Motor neuron (in vitro differentiated cells): ENCODE measurements at regions of chr13 and their contacts with region 1.

Region 1: DNA sequence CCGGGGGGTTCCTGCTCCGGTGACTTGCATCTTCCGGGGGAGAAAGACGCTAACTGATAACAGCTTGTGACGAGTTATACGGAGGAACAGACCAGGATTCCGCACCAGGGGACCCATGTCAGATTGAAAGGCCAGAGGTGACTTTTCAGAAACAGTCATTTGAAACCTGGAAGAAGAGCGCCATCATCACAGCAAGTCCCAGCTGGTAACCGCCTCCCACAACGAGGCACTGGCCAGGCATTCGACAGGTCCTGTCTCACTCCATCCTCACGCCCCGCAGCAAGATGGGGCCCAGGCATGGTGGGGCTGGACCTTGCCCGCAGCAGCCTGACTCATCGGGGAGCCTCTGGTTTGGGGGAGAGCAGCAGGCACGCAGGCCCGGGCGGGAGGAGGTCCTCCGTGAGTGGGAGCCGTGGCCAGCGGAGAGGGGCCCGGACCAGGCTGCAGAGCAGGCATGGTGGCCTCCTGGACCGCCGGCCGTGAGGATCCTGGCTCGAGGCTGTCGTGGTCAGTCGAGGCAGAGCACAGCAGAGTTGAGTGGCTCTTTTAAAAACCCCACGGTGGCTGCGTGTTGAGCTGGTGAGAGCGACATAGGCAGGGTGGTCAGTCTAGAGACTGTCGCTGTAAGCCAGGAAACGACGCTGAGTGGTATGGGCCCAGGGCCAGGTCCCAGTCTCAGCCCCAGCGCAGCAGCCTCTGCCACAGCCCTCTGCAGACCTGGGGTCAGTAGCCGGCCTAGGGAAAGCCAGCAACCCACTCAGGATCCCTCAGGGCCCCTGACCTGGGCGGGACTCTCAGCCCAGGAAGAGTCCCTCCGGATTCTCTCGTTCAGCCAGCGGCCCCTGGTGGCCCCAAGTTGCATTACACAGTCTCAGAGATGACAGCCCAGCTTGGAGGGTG is 94.9 kb upstream of the MCF2L start:
- ATAC-seq: peak; percentile 87 to 99 (median 91)
- H3K4me3 ChIP-seq: no peak overlapping the region
- H3K27ac ChIP-seq: no peak overlapping the region
- H3K4me1 ChIP-seq: peaks cover 2 to 4% of the 10 kb centered on the region in 2 donors

Region 2: GRCh38 chr13:112416647-112417046 is 457.5 kb before region 1 on chr13:
- in situ Hi-C with region 1: no loop called
- ATAC-seq: no peak
- H3K4me3 ChIP-seq: no peak overlapping the region
- H3K27ac ChIP-seq: no peak overlapping the region
- H3K4me1 ChIP-seq: no peaks in the 10 kb centered on the region

Region 3: DNA sequence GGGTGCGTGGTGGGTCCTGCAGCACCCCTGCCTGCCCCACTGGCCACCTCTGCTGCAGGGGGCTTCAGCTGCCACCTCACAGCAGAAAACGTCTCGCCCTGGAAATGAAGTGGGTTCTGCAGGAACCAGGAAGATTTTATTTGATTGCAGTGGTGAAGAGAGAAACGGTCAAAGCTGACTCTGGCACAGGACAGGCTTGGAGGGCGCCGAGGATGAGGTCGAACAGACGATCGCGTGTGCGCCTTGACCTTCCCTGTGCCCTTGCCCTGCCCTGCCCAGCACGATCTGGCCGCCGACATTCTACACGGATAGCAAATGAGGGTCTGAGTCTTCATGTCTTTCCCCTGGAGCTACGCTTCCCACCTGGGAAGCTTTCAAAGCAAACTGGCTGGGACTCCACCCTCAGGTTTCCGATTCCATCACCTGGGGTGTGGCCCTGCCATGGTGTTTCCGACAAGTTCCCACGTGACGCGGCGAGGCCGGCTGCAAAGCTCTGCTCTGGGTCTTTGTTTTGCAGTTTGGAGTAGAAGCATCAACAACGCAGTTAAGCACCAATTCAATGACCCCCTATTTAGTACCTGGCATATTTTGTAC is 235.8 kb before region 1 on chr13:
- in situ Hi-C with region 1: loop called in 1 of 9 experiments (anchors 25 kb)
- ATAC-seq: no peak
- H3K4me3 ChIP-seq: no peak overlapping the region
- H3K27ac ChIP-seq: no peak overlapping the region
- H3K4me1 ChIP-seq: no peaks in the 10 kb centered on the region

Region 4: DNA sequence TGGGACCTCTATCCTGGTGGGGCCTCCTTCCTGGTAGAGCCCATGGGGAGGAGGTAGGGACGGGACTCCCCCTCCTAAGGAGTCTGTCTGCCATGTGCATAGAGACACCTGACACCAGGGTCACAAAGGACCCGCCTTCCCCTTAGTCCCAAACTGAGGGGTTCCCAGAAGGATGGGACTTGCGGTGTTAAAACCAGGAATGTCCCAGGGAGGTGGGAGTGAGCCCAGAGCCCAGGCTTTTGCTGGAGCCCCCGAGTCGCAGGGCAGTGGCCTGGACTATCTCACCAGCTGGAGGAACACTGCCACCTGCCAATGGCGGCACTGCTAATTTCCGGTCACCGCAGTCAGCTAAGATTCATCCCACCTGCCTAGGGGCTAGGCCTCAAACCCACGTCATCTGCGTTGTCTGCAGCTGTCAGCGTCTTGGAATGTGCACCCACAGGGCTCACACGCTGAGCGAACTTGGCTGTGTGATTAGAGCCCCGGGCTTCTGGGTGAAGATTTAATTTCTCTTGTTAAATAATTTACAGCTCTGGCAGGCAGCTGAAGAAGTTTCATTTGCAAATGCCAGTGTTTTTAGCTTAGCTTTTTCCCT is 216.2 kb before region 1 on chr13:
- in situ Hi-C with region 1: loop called in 1 of 9 experiments (anchors 25 kb)
- ATAC-seq: peak in 4 of 8 experiments; percentile 19 to 99 (median 68)
- H3K4me3 ChIP-seq: no peak overlapping the region
- H3K27ac ChIP-seq: no peak overlapping the region
- H3K4me1 ChIP-seq: no peaks in the 10 kb centered on the region

Region 5: DNA sequence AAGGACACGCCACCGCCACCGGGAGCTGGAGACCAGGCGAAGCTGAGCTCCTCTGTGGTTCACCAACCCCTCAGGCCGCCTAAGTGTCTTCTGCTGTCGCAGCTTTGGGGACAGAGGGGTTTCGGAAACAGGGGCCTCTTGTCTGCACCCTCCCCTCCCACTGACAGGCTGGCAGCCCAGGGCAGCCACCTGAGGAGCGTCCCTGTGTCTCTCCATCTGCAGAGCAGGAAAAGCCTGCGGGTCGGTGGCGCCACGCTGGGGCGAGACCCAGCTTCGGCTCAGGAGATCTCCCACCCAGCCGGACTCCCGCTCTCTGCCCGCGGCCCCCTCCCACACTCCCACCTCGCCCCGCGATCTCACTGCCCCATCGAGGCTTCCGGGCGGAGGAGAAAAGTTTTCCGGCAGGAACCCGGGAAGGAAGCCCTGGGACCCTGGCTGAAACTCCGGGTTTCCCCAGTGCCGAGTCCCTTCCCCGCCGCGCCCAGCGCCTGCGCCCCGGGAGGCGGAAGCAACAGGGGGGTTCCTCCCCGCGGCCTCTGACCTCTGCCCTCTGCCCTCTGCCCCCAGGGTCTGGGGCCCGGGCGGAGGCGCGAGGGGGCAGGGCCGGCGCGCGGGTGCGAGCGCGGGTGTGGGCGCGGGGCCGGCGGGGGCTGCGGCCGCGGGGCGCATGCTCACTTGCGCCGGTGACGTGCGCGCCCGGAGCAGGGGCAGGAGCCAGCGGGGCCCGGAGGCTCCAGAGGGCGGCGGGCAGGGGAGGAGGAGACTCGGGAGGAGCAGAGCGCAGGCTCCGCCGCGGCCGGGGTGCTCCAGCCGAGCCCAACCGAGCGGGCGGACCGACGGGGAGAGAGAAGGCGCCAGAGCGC is 184.6 kb before region 1 on chr13 and contains the start of gene ATP11A:
- in situ Hi-C with region 1: loop called in 1 of 9 experiments (anchors 25 kb)
- ATAC-seq: peak; percentile 90 to 98 (median 95)
- H3K4me3 ChIP-seq: peak within 1 kb of the TSS; percentile 53 to 88 (median 69)
- H3K27ac ChIP-seq: peak within 1 kb of the TSS; percentile 39 to 82
- H3K4me1 ChIP-seq: peaks cover 9 to 12% of the 10 kb centered on the region in 2 donors
- total RNA-seq, gene ATP11A: 6.7 to 36.1 (median 10.2) TPM

Region 6: DNA sequence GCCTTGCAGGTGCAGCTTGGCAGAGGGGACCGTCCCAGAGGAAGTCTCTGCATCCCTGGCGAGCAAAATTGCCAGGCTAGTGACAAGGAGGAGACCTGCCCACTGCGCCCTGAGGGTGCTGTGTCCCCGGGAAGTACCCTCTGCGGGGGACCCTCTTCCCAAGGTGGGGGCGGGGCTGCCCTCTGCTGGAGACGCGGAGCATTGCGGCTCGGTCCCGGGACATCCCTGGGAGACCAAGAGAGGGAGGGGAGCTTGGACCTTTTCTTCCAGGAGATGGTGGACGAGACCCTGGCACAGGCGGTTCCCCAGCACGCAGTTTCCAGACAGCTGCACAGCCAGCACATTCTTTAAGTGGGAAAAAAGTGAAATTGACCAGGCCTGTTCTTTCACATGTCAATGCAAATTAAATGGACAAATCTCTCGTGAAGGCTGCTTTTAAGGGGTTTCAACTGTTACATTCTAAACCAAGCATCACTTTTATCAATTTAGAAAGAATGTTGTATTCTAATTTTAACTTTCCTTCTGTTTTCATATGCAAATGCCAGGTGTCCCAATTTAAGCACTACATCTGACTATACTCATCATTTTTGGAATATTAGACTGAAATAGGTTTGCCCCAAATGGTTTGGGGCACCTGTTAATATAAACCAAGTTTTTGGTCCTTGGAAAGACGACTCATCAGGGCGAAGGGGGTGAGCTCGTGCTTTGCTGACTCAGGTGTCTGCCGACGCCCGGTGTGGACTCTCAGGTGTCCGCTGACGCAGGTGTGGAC is 155.6 kb after region 1 on chr13:
- in situ Hi-C with region 1: no loop called
- ATAC-seq: peak; percentile 41 to 86 (median 79)
- H3K4me3 ChIP-seq: no peak overlapping the region
- H3K27ac ChIP-seq: no peak overlapping the region
- H3K4me1 ChIP-seq: no peaks in the 10 kb centered on the region